Esophagus muscularis mucosa (tissue), 4 donors: ENCODE measurements at regions of chr17 and their contacts with region 1.

Region 1: GRCh38 chr17:16521070-16521727 is 29.2 kb upstream of the LRRC75A start:
- DNase-seq: no peak
- H3K4me3 ChIP-seq: no peak overlapping the region
- H3K27ac ChIP-seq: no peak overlapping the region
- H3K4me1 ChIP-seq: peaks cover 14 to 17% (median 15%) of the 10 kb centered on the region in 4 donors
- H3K27me3 ChIP-seq: peaks cover 0 to 16% (median 0%) of the 10 kb centered on the region in 4 donors
- CTCF ChIP-seq: peak; percentile 90 to 92 (median 91)
- EP300 ChIP-seq: no peak
- POLR2A ChIP-seq: no peak

Region 2: DNA sequence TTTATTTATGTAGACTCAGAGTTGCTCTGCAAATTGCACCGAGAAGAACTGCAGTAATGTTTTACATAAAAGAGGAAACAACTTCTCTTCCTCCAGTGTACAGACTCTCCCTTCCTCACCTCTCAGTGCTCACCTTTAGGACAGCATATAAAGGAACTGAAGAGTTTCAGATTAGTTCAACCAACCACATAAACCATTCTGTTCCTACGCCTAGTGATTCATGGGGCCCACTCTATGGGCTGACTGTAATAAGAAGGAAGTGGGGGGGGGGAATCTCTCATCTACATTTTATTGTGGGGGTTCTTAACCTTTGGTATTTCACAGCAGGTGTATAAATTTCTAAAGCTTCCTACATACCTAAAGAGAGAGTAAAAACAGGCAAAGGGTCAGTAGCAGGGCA is 540.0 kb before region 1 on chr17:
- intact Hi-C with region 1: no loop called
- DNase-seq: no peak
- H3K4me3 ChIP-seq: no peak overlapping the region
- H3K27ac ChIP-seq: no peak overlapping the region
- H3K4me1 ChIP-seq: no peaks in the 10 kb centered on the region
- H3K27me3 ChIP-seq: no peaks in the 10 kb centered on the region
- CTCF ChIP-seq: no peak
- EP300 ChIP-seq: no peak
- POLR2A ChIP-seq: no peak

Region 3: DNA sequence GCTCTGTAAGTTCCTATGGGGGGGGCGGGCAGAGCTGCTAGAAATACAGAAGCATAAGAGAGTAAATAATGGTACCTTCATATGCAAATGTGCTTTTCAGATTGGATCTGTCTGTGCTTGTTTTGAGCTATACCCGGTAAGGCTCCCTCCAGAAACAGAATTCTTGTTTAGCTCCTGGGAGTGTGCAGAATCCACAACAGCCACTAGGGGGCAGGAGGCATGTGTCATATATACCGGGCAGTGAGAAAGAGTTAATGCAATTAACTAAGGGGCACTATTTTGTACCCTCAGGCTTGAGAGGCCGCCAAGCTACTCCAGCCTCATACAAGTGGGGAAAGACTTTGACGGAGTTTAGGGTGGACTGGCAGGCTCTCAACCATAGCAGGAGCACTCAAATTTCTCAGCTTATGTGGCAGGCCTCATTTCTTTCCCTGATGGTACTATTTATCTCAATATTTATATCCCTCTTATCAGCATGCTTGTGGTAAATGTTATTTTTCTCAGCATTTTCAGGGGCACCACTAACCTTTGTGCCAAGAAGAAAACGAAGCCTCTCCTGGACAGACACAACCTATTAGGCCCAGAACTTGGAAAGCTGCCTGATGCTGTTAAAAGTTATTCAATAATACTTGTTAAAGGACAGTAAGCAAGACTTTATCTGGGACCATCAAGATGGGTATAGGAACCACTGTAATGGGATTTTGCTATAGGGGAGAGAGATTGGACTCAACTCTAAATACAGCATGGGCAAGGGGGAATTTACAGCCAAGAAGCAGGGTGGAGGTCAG is 157.3 kb before region 1 on chr17:
- intact Hi-C with region 1: loop called (anchors 5 kb)
- DNase-seq: peak; percentile 94
- H3K4me3 ChIP-seq: no peak overlapping the region
- H3K27ac ChIP-seq: no peak overlapping the region
- H3K4me1 ChIP-seq: peaks cover 0 to 10% (median 3%) of the 10 kb centered on the region in 4 donors
- H3K27me3 ChIP-seq: no peaks in the 10 kb centered on the region
- CTCF ChIP-seq: peak; percentile 84 to 94 (median 85)
- EP300 ChIP-seq: no peak
- POLR2A ChIP-seq: no peak

Region 4: GRCh38 chr17:16380640-16381495 is 140.3 kb before region 1 on chr17 and contains the start of gene UBB:
- intact Hi-C with region 1: loop called (anchors 2 kb)
- DNase-seq: peak; percentile 99
- H3K4me3 ChIP-seq: peak within 1 kb of the TSS; percentile 65 to 93 (median 80)
- H3K27ac ChIP-seq: peak within 1 kb of the TSS; percentile 93 to 96 (median 94)
- H3K4me1 ChIP-seq: peaks cover 37 to 44% (median 39%) of the 10 kb centered on the region in 4 donors
- H3K27me3 ChIP-seq: no peaks in the 10 kb centered on the region
- CTCF ChIP-seq: no peak
- EP300 ChIP-seq: no peak
- POLR2A ChIP-seq: peak; percentile 88
- total RNA-seq, gene UBB: 713 to 1,130 (median 983) TPM

Region 5: GRCh38 chr17:16449121-16449570 is 72.1 kb before region 1 on chr17:
- intact Hi-C with region 1: loop called (anchors 1 kb)
- DNase-seq: no peak
- H3K4me3 ChIP-seq: no peak overlapping the region
- H3K27ac ChIP-seq: no peak overlapping the region
- H3K4me1 ChIP-seq: peaks cover 12 to 27% (median 24%) of the 10 kb centered on the region in 4 donors
- H3K27me3 ChIP-seq: no peaks in the 10 kb centered on the region
- CTCF ChIP-seq: no peak
- EP300 ChIP-seq: no peak
- POLR2A ChIP-seq: no peak

Region 6: GRCh38 chr17:16477255-16477654 is 43.9 kb before region 1 on chr17:
- intact Hi-C with region 1: no loop called
- DNase-seq: no peak
- H3K4me3 ChIP-seq: no peak overlapping the region
- H3K27ac ChIP-seq: peak overlapping the region; percentile 52 to 75 (median 64)
- H3K4me1 ChIP-seq: peaks cover 0 to 26% (median 14%) of the 10 kb centered on the region in 4 donors
- H3K27me3 ChIP-seq: no peaks in the 10 kb centered on the region
- CTCF ChIP-seq: no peak
- EP300 ChIP-seq: no peak
- POLR2A ChIP-seq: no peak